ENCODE measurements at regions of chr5 and their contacts with region 1.

Region 1: DNA sequence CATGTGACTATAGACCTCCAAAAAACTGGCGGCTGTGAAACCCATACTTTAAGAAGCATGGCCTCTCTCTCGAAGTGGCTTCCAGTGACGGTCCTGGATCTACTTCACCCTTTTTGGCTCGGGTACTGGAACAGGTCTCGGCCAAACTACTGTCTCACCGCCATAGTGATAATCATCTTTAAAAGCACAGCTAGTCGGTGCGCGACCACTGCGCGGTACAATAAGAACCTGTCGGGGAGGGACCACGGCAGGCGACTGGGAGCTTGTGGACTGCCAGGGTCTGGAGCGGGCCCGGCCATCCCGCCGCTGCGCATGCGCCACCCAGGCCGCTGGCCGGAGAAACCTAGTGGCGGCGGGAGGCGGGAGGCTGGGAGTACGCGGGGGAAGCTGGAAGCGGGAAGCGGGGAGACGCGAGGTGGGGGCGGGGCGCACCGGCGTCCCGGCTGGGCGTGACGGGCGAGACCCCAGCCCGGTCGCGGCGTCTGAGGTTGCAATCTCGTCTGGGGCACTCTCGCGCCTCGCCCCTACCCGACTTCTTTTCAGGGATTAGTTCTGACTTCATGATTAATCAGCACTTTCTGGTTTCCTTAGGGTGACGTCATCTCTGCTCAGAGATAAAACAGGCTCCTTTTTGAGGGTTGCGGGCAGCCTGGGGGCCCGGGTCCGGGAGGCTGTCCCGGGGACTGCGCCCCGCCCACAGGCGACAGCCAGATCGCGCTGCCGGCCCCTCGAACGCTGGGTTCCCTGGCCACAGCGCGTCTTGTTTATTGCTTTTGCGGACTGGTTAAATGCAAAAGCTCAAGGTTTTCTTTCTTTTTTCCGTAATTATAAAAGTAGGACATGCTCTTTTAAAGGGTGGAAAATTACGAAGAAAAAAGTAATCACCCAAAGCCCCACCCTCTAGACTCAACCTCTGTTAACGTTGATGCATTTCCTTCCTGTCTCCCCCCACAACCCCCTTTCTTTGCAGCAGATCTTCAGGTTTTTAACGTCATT is 266.8 kb downstream of the CWC27 start:
- DNase-seq: peak; percentile 93
- H3K4me3 Mint-ChIP-seq: peak overlapping the region; percentile 86
- H3K27ac Mint-ChIP-seq: peak overlapping the region; percentile 92
- H3K4me1 Mint-ChIP-seq: peaks cover 29% of the 10 kb centered on the region
- H3K27me3 Mint-ChIP-seq: peaks cover 1% of the 10 kb centered on the region

Region 2: GRCh38 chr5:64768358-64769312 is 266.9 kb before region 1 on chr5 and contains the starts of genes CWC27 and SREK1IP1:
- intact Hi-C with region 1: loop called (anchors 5 kb)
- DNase-seq: peak; percentile 95
- H3K4me3 Mint-ChIP-seq: peak within 1 kb of the TSS; percentile 97
- H3K27ac Mint-ChIP-seq: peak within 1 kb of the TSS; percentile 94
- H3K4me1 Mint-ChIP-seq: peaks cover 43% of the 10 kb centered on the region
- H3K27me3 Mint-ChIP-seq: no peaks in the 10 kb centered on the region
- total RNA-seq, gene CWC27: 31.8 and 32.4 TPM in 2 replicates
- total RNA-seq, gene SREK1IP1: 31.1 and 34.8 TPM in 2 replicates

Region 3: DNA sequence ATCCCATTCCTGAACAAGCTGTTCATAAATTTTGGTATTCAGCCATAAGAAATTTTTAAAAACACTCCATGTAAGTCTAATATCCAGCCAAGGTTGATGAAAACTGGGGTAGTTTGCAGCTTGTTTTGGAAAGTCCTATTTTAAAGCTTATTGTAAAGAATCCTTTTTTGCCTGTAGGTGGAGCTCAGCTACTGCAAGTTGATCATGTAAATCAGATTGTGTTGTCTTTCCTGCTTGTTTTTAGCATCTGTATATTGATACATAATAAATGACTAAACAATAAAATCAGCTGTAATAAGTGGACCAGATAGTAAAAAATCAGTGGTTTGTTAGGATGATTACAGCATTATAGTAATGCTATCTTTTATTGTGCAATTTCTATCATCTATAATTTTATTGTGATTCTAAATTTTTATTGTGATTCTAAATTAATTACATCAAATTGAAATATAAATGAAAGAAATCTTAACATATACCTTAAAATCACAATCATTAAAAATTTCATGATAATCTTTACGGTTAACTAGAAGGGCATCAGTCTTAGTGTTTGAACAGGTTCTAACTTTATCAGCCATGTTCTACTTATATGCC is 224.4 kb before region 1 on chr5:
- intact Hi-C with region 1: loop called (anchors 5 kb)
- DNase-seq: peak; percentile 73
- H3K4me3 Mint-ChIP-seq: no peak overlapping the region
- H3K27ac Mint-ChIP-seq: no peak overlapping the region
- H3K4me1 Mint-ChIP-seq: peaks cover 1% of the 10 kb centered on the region
- H3K27me3 Mint-ChIP-seq: no peaks in the 10 kb centered on the region

Region 4: GRCh38 chr5:65102828-65103711 is 67.6 kb after region 1 on chr5:
- intact Hi-C with region 1: loop called (anchors 2 kb)
- DNase-seq: peak; percentile 80
- H3K4me3 Mint-ChIP-seq: peak overlapping the region; percentile 80
- H3K27ac Mint-ChIP-seq: peak overlapping the region; percentile 74
- H3K4me1 Mint-ChIP-seq: peaks cover 30% of the 10 kb centered on the region
- H3K27me3 Mint-ChIP-seq: peaks cover 13% of the 10 kb centered on the region

Region 5: GRCh38 chr5:65173130-65173525 is 137.6 kb after region 1 on chr5:
- intact Hi-C with region 1: no loop called
- DNase-seq: no peak
- H3K4me3 Mint-ChIP-seq: no peak overlapping the region
- H3K27ac Mint-ChIP-seq: no peak overlapping the region
- H3K4me1 Mint-ChIP-seq: peaks cover 3% of the 10 kb centered on the region
- H3K27me3 Mint-ChIP-seq: peaks cover 9% of the 10 kb centered on the region

Region 6: GRCh38 chr5:65190328-65191053 is 155.0 kb after region 1 on chr5:
- intact Hi-C with region 1: loop called (anchors 2 kb)
- DNase-seq: no peak
- H3K4me3 Mint-ChIP-seq: no peak overlapping the region
- H3K27ac Mint-ChIP-seq: peak overlapping the region; percentile 64
- H3K4me1 Mint-ChIP-seq: peaks cover 8% of the 10 kb centered on the region
- H3K27me3 Mint-ChIP-seq: no peaks in the 10 kb centered on the region

Region 7: DNA sequence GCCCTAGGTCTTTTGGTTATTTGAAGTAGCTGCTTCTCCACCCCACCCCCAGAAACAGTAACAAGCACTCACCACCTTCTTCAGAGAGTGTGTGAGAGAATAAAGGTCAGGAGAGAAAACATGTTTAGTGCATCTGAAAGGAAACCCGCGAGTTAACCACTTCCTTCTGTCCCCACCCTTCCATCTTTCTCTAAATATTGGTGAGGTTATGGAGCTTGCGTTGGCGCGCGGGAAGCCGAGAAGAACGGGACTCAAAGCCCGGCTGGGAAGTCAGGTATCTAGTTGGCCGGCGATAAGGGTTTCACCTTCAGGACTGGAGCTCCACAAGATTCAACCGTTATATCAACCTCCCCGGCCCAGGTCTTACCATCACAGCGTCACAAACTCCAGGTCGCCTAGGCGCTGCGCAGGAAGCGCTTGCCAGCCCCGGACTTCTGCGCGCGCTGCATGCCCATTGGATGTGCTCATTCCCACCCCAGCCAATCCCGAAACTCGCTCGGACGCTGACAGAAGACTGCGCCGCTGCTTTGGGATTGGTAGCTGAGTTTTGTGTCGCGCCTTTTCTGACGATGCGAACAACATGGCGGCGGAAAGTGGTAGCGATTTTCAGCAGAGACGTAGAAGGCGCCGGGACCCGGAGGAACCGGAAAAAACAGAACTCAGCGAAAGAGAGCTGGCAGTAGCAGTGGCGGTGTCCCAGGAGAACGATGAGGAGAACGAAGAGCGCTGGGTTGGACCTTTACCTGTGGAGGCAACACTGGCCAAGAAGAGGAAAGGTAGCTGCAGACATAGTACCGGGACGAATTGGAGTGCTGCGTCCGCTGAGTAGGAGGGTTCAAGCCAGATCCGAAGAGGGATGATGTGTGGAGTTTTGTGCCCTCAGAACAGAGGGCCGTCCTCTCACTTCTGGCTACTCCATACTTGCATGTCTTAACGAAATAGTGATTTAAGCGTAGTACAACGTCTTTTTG is 527.5 kb after region 1 on chr5 and contains the starts of genes CENPK and PPWD1:
- intact Hi-C with region 1: loop called (anchors 5 kb)
- DNase-seq: peak; percentile 98
- H3K4me3 Mint-ChIP-seq: peak within 1 kb of the TSS; percentile 91
- H3K27ac Mint-ChIP-seq: peak within 1 kb of the TSS; percentile 96
- H3K4me1 Mint-ChIP-seq: peaks cover 50% of the 10 kb centered on the region
- H3K27me3 Mint-ChIP-seq: no peaks in the 10 kb centered on the region
- total RNA-seq, gene CENPK: 87.8 and 88.8 TPM in 2 replicates
- total RNA-seq, gene PPWD1: 53.9 and 55.6 TPM in 2 replicates

Region 8: DNA sequence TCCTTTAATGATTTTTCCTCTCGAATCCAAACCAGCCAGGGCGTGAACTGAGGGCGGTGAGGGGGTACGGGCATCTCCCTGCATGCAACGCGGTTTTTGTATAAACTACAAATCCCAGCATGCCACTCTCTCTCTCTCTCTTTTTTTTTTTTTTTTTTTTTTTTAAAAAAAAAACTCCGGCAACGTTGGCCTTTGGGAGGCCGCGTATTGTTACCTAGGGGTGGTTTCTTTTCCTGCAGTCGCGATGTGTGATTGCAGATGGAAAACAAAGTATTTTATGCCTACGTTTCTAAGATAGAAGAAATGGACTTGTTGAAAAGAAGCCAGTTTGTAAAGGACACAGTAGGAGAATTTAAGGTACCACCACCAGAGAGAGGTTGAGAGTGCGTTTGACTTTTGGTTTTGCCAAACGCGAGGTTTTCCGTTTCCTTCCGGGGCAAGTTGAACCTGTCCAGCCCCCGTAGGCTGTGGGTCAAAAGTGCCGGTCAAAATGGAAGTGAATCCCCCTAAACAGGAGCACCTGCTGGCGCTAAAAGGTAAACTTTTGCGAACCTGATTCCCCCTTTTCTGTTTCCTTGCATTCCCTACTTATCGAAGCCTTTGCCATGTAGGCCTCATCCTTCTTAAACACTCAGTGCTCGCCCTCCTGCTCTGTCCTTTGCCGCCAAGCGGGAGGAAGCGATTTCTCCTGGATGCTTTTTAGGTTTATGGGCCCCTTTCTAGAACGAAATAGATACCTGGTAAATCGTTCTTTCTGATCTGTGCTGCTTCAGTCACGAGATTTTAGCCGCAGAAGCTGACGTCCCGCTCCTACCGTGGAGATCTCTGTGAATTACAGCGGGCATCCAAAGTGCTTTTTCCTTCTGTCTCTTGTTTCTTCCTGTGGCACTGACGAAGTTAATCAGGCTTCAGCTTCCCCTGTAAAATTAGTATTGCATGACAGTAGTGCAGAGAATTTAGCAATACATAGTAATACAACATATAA is 589.4 kb after region 1 on chr5 and contains the starts of genes SHLD3 and TRAPPC13:
- intact Hi-C with region 1: loop called (anchors 1 kb)
- DNase-seq: peak; percentile 95
- H3K4me3 Mint-ChIP-seq: peak within 1 kb of the TSS; percentile 91
- H3K27ac Mint-ChIP-seq: peak within 1 kb of the TSS; percentile 99
- H3K4me1 Mint-ChIP-seq: peaks cover 28% of the 10 kb centered on the region
- H3K27me3 Mint-ChIP-seq: no peaks in the 10 kb centered on the region
- total RNA-seq, gene SHLD3: 4.7 and 5.1 TPM in 2 replicates
- total RNA-seq, gene TRAPPC13: 22.4 and 27.2 TPM in 2 replicates

Measured in activated CD4-positive, alpha-beta T cell treated with anti-CD3 and anti-CD28 coated beads, Interleukin-2, amount 10 ng/mL, durations not matched to agents 24 days and 14 days (primary cell).